ENCODE measurements at regions of chr2 and their contacts with region 1.

Region 1: DNA sequence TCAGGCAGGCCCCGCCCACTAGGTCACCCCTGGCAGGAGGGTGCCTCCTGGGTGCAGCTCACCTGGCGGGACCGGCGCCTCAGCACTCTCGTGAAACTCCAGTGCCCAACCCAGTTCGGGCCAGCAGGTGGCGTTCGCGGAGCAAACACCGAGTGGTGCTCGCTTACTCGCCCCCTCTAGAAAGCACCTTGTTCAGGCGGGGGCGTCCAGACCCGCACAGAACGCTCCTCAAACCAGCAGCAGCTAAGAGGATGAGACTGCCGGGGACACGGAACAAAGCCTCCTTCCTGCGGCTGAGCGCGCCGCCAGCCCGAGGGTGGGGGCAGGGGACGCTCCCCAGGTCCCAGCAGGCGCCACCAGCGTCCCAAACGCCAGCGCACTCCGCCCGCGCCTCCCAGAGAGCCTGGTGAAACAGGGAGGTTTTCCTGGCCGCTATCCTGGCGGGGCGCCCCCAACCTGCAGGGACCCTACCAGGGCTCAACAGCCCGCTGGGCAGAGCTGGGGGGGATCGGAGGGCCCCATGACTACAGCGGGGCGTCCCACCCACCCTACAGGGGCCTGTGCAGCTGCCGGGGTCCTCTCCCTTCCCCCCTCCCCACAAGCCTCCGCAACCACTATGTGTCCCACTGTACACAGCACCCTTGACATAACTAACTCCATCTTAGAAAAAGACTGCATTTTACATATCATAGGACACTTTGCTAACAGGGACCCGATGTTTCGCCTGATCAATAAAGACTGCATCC is 44.7 kb downstream of the MRPS5 start:
- DNase-seq: peak; percentile 71 to 95 (median 90)
- ATAC-seq: peak; percentile 82
- H3K4me3 ChIP-seq: peak overlapping the region; percentile 33 to 64
- H3K4me3 Mint-ChIP-seq: peak overlapping the region; percentile 83
- H3K27ac ChIP-seq: no peak overlapping the region
- H3K27ac Mint-ChIP-seq: peak overlapping the region; percentile 97
- H3K4me1 ChIP-seq: peaks cover 71% of the 10 kb centered on the region
- H3K4me1 Mint-ChIP-seq: peaks cover 72% of the 10 kb centered on the region
- H3K27me3 ChIP-seq: no peaks in the 10 kb centered on the region
- H3K27me3 Mint-ChIP-seq: no peaks in the 10 kb centered on the region
- CTCF ChIP-seq: peak; percentile 80

Region 2: GRCh38 chr2:95034221-95034620 is 42.7 kb before region 1 on chr2:
- CTCF ChIA-PET with region 1: interaction called, 30 read pairs
- POLR2A ChIA-PET with region 1: interaction called, 7 read pairs
- intact Hi-C with region 1: no loop called
- DNase-seq: no peak
- ATAC-seq: no peak
- H3K4me3 ChIP-seq: no peak overlapping the region
- H3K4me3 Mint-ChIP-seq: no peak overlapping the region
- H3K27ac ChIP-seq: no peak overlapping the region
- H3K27ac Mint-ChIP-seq: peak overlapping the region; percentile 49
- H3K4me1 ChIP-seq: peaks cover 92% of the 10 kb centered on the region
- H3K4me1 Mint-ChIP-seq: peaks cover 84% of the 10 kb centered on the region
- H3K27me3 ChIP-seq: no peaks in the 10 kb centered on the region
- H3K27me3 Mint-ChIP-seq: no peaks in the 10 kb centered on the region
- CTCF ChIP-seq: no peak

Region 3: GRCh38 chr2:95053543-95053942 is 23.4 kb before region 1 on chr2:
- CTCF ChIA-PET with region 1: interaction called, 226 read pairs
- POLR2A ChIA-PET with region 1: interaction called, 67 read pairs
- intact Hi-C with region 1: loop called in 1 of 2 experiments (anchors 1 kb)
- DNase-seq: peak in 5 of 9 experiments; percentile 25 to 56 (median 30)
- ATAC-seq: peak; percentile 28
- H3K4me3 ChIP-seq: no peak overlapping the region
- H3K4me3 Mint-ChIP-seq: peak overlapping the region; percentile 60
- H3K27ac ChIP-seq: no peak overlapping the region
- H3K27ac Mint-ChIP-seq: peak overlapping the region; percentile 92
- H3K4me1 ChIP-seq: peaks cover 69% of the 10 kb centered on the region
- H3K4me1 Mint-ChIP-seq: peaks cover 66% of the 10 kb centered on the region
- H3K27me3 ChIP-seq: no peaks in the 10 kb centered on the region
- H3K27me3 Mint-ChIP-seq: no peaks in the 10 kb centered on the region
- CTCF ChIP-seq: no peak

Region 4: DNA sequence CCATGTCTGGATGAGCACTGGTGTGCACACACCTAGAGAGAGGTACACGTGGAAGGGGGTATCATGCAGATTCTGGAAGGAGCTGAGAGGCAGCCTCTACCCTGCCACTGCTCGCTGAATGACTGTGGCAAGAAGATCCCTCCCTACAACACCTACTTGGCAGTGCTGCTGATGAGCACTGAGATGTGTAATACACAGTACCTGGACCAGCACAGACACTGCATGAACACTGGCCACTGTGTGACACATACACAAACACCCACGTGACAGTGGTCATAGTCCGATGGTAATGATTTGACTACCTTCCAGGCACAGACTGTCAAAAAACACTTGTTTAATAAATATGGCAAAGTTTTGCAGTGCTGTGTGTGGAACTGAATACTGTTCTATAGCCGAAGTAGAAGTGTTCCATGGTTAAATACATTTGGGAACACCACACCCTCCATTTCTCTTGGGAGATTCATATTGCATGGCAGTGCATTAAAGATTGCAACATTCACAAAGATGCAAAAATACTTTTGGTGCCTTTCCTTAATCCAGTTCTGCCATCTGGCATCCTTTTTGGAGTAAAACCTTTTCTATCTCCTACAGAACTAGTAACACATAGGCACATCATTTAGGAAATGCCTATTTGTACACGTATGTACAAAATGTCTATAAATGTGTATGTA is 15.1 kb after region 1 on chr2:
- CTCF ChIA-PET with region 1: interaction called, 10 read pairs
- POLR2A ChIA-PET with region 1: no interaction called
- intact Hi-C with region 1: no loop called
- DNase-seq: no peak
- ATAC-seq: no peak
- H3K4me3 ChIP-seq: no peak overlapping the region
- H3K4me3 Mint-ChIP-seq: no peak overlapping the region
- H3K27ac ChIP-seq: no peak overlapping the region
- H3K27ac Mint-ChIP-seq: no peak overlapping the region
- H3K4me1 ChIP-seq: no peaks in the 10 kb centered on the region
- H3K4me1 Mint-ChIP-seq: peaks cover 28% of the 10 kb centered on the region
- H3K27me3 ChIP-seq: no peaks in the 10 kb centered on the region
- H3K27me3 Mint-ChIP-seq: no peaks in the 10 kb centered on the region
- CTCF ChIP-seq: no peak

Region 5: DNA sequence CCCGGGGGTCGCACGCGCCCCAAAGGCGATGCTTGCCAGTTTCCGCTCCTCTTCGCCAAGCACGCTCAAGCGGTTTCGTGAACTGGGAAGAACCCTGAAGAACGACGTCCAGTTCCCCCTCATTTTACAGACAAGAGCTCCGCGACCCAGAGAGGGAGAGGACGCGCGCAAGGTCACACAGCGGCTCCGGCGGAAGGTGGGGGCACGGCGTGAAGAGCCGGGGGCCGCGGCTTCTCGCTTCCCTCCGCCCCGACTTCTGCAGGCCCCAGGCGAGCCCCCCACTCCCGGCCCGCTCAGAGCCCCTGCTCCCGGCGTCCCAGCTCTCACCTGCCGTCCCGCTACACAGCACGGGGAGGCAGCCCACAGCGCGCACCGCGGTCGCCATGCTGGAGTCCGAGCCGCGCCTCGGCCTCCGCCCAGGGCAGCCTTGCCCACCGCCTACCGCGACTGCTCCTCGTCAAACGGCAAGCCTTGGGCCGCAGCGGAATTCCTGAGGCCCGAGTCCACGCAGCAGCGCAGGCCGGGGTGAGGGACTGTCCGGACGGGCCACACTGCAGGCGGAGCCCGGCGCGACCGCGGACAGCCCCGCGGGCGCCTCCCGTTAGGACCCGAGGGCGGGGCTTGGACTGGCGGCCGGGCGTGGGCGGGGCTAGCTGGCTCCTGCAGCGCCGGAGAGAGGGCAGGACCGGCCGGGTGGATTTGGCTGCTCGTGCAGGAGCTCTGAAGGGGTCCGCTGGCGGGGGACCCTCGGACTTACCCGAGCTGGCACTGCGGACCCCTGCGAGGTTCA is 44.6 kb after region 1 on chr2 and contains the start of gene MRPS5:
- CTCF ChIA-PET with region 1: interaction called, 133 read pairs
- POLR2A ChIA-PET with region 1: interaction called, 5 read pairs
- intact Hi-C with region 1: no loop called
- DNase-seq: peak; percentile 75 to 93 (median 85)
- ATAC-seq: peak; percentile 94
- H3K4me3 ChIP-seq: peak within 1 kb of the TSS; percentile 87 to 89
- H3K4me3 Mint-ChIP-seq: peak within 1 kb of the TSS; percentile 96
- H3K27ac ChIP-seq: peak within 1 kb of the TSS; percentile 81 to 85
- H3K27ac Mint-ChIP-seq: peak within 1 kb of the TSS; percentile 96
- H3K4me1 ChIP-seq: peaks cover 29% of the 10 kb centered on the region
- H3K4me1 Mint-ChIP-seq: peaks cover 44% of the 10 kb centered on the region
- H3K27me3 ChIP-seq: no peaks in the 10 kb centered on the region
- H3K27me3 Mint-ChIP-seq: no peaks in the 10 kb centered on the region
- CTCF ChIP-seq: no peak
- total RNA-seq, gene MRPS5: 20.0 to 21.3 TPM

Region 6: GRCh38 chr2:95207111-95207961 is 130.4 kb after region 1 on chr2 and contains the start of gene ZNF892:
- CTCF ChIA-PET with region 1: no interaction called
- POLR2A ChIA-PET with region 1: no interaction called
- intact Hi-C with region 1: loop called in 1 of 2 experiments (anchors 1 kb)
- DNase-seq: peak; percentile 53 to 89 (median 79)
- ATAC-seq: peak; percentile 90
- H3K4me3 ChIP-seq: peak within 1 kb of the TSS; percentile 74 to 97
- H3K4me3 Mint-ChIP-seq: peak within 1 kb of the TSS; percentile 94
- H3K27ac ChIP-seq: peak within 1 kb of the TSS; percentile 68 to 79
- H3K27ac Mint-ChIP-seq: peak within 1 kb of the TSS; percentile 91
- H3K4me1 ChIP-seq: peaks cover 7% of the 10 kb centered on the region
- H3K4me1 Mint-ChIP-seq: peaks cover 32% of the 10 kb centered on the region
- H3K27me3 ChIP-seq: no peaks in the 10 kb centered on the region
- H3K27me3 Mint-ChIP-seq: no peaks in the 10 kb centered on the region
- CTCF ChIP-seq: no peak
- total RNA-seq, gene ZNF892: 0.71 to 0.78 TPM

Measured in CD8-positive, alpha-beta T cell (primary cell).